Caco-2 (cell line): ENCODE measurements at regions of chr5 and their contacts with region 1.

Region 1: GRCh38 chr5:93582677-93583438 is at the start of gene NR2F1:
- DNase-seq: peak; percentile 66 to 84
- H3K4me3 ChIP-seq: peak within 1 kb of the TSS; percentile 31
- H3K4me3 Mint-ChIP-seq: no peak within 1 kb of the TSS
- H3K27ac Mint-ChIP-seq: no peak within 1 kb of the TSS
- H3K4me1 ChIP-seq: no peaks in the 10 kb centered on the region
- H3K4me1 Mint-ChIP-seq: peaks cover 13% of the 10 kb centered on the region
- H3K27me3 ChIP-seq: 0 out of 2 replicates have a peak, but pooled peaks cover 1% of the 10 kb centered on the region
- H3K27me3 Mint-ChIP-seq: peaks cover 14% of the 10 kb centered on the region
- CTCF ChIP-seq: no peak
- total RNA-seq, gene NR2F1: 0.70 and 1.2 TPM in 2 replicates

Region 2: DNA sequence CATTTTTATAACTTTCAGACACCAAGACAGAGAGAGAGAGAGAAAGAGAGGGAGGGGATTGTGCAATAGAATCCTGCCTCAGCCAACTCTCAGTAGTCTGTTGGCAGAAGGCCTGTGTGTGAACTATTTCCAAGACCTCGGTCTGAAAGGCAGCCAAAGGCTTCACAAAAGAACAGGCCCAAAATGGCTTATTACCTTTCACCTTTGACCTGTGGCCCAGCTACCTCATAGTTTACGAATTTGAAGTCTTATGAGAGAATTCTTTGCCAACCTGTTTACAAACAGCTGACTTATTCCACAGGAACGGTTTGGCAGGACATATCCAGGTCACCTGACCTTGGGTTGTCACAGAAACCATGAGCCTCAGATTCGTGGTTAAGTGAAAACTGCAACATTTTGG is 50.5 kb before region 1 on chr5:
- CTCF ChIA-PET with region 1: no interaction called
- POLR2A ChIA-PET with region 1: no interaction called
- intact Hi-C with region 1: no loop called
- DNase-seq: no peak
- H3K4me3 ChIP-seq: no peak overlapping the region
- H3K4me3 Mint-ChIP-seq: no peak overlapping the region
- H3K27ac Mint-ChIP-seq: no peak overlapping the region
- H3K4me1 ChIP-seq: no peaks in the 10 kb centered on the region
- H3K4me1 Mint-ChIP-seq: no peaks in the 10 kb centered on the region
- H3K27me3 ChIP-seq: no peaks in the 10 kb centered on the region
- H3K27me3 Mint-ChIP-seq: no peaks in the 10 kb centered on the region
- CTCF ChIP-seq: no peak

Region 3: DNA sequence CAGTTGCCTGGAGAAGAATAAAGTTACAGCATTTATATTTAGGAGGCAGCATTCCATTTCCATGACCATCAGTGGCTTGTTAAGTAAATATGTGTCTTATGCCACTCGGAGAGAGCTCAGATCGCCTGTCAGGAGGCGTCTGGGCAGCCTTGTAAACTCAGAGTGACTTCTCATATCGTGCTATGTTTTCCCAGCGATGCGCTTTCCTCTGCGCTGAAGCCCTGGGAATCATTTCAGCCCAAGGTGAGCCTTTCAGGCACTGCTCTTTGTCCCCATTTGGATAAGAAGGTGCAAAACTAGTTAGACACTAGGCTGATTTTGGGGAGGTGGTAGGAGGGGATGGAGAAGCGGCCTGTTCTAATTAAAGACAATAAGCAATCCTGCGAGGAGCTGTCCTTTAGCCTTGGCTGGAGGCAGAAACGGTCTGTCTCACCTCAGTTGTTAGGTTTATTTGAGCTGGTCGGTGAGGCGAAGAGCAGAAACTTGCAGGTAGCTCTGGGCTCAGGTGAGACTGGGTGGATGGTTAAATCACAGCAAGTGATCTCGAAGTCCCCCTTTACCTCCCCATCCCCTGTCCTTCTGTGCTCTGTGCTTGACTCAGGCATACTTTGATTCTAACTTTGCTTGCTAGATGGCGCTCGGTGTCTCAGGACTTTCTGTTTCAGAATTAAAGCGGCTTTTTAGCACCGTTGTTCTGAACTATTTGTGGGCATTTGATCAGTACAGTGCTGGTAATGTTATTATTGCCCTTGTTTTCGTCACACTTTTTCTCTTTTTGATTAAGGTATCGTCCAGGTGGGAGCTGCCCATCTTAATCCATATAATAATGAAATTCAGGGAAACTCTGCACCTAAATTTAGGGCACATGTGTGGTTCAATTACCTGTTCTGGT is 24.8 kb after region 1 on chr5:
- CTCF ChIA-PET with region 1: no interaction called
- POLR2A ChIA-PET with region 1: no interaction called
- intact Hi-C with region 1: loop called (anchors 2 kb)
- DNase-seq: peak in 1 of 2 experiments; percentile 45
- H3K4me3 ChIP-seq: no peak overlapping the region
- H3K4me3 Mint-ChIP-seq: no peak overlapping the region
- H3K27ac Mint-ChIP-seq: no peak overlapping the region
- H3K4me1 ChIP-seq: no peaks in the 10 kb centered on the region
- H3K4me1 Mint-ChIP-seq: peaks cover 3% of the 10 kb centered on the region
- H3K27me3 ChIP-seq: peaks cover 3% of the 10 kb centered on the region; the same call in 1 of the 2 replicates
- H3K27me3 Mint-ChIP-seq: peaks cover 26% of the 10 kb centered on the region
- CTCF ChIP-seq: peak; percentile 7 to 63

Region 4: GRCh38 chr5:93620487-93621326 is 37.8 kb after region 1 on chr5:
- CTCF ChIA-PET with region 1: no interaction called
- POLR2A ChIA-PET with region 1: no interaction called
- intact Hi-C with region 1: loop called (anchors 1 kb)
- DNase-seq: peak; percentile 69 to 76
- H3K4me3 ChIP-seq: peak overlapping the region; percentile 83
- H3K4me3 Mint-ChIP-seq: peak overlapping the region; percentile 97
- H3K27ac Mint-ChIP-seq: peak overlapping the region; percentile 69
- H3K4me1 ChIP-seq: no peaks in the 10 kb centered on the region
- H3K4me1 Mint-ChIP-seq: peaks cover 12% of the 10 kb centered on the region
- H3K27me3 ChIP-seq: no peaks in the 10 kb centered on the region
- H3K27me3 Mint-ChIP-seq: no peaks in the 10 kb centered on the region
- CTCF ChIP-seq: no peak

Region 5: GRCh38 chr5:93681432-93681831 is 98.6 kb after region 1 on chr5:
- CTCF ChIA-PET with region 1: no interaction called
- POLR2A ChIA-PET with region 1: no interaction called
- intact Hi-C with region 1: loop called (anchors 5 kb)
- DNase-seq: no peak
- H3K4me3 ChIP-seq: no peak overlapping the region
- H3K4me3 Mint-ChIP-seq: no peak overlapping the region
- H3K27ac Mint-ChIP-seq: no peak overlapping the region
- H3K4me1 ChIP-seq: no peaks in the 10 kb centered on the region
- H3K4me1 Mint-ChIP-seq: no peaks in the 10 kb centered on the region
- H3K27me3 ChIP-seq: no peaks in the 10 kb centered on the region
- H3K27me3 Mint-ChIP-seq: no peaks in the 10 kb centered on the region
- CTCF ChIP-seq: peak; percentile 32 to 52

Region 6: GRCh38 chr5:93915142-93915553 is 332.3 kb after region 1 on chr5:
- CTCF ChIA-PET with region 1: no interaction called
- POLR2A ChIA-PET with region 1: no interaction called
- intact Hi-C with region 1: loop called (anchors 1 kb)
- DNase-seq: peak in 1 of 2 experiments; percentile 51
- H3K4me3 ChIP-seq: no peak overlapping the region
- H3K4me3 Mint-ChIP-seq: no peak overlapping the region
- H3K27ac Mint-ChIP-seq: no peak overlapping the region
- H3K4me1 ChIP-seq: no peaks in the 10 kb centered on the region
- H3K4me1 Mint-ChIP-seq: no peaks in the 10 kb centered on the region
- H3K27me3 ChIP-seq: no peaks in the 10 kb centered on the region
- H3K27me3 Mint-ChIP-seq: no peaks in the 10 kb centered on the region
- CTCF ChIP-seq: peak; percentile 57 to 61

Region 7: GRCh38 chr5:94316916-94317838 is 734.3 kb after region 1 on chr5:
- CTCF ChIA-PET with region 1: no interaction called
- POLR2A ChIA-PET with region 1: no interaction called
- intact Hi-C with region 1: loop called (anchors 10 kb)
- DNase-seq: no peak
- H3K4me3 ChIP-seq: no peak overlapping the region
- H3K4me3 Mint-ChIP-seq: no peak overlapping the region
- H3K27ac Mint-ChIP-seq: no peak overlapping the region
- H3K4me1 ChIP-seq: no peaks in the 10 kb centered on the region
- H3K4me1 Mint-ChIP-seq: peaks cover 5% of the 10 kb centered on the region
- H3K27me3 ChIP-seq: no peaks in the 10 kb centered on the region
- H3K27me3 Mint-ChIP-seq: peaks cover 2% of the 10 kb centered on the region
- CTCF ChIP-seq: no peak